ENCODE measurements at regions of chr20 and their contacts with region 1.

Region 1: GRCh38 chr20:51404298-51405060 is 138.0 kb downstream of the NFATC2 start:
- DNase-seq: peak; percentile 69
- ATAC-seq: peak; percentile 80
- H3K4me3 Mint-ChIP-seq: peak overlapping the region; percentile 56
- H3K27ac Mint-ChIP-seq: peak overlapping the region; percentile 99
- H3K4me1 Mint-ChIP-seq: peaks cover 84% of the 10 kb centered on the region
- H3K27me3 Mint-ChIP-seq: no peaks in the 10 kb centered on the region
- CTCF ChIP-seq: no peak

Region 2: GRCh38 chr20:50815162-50815989 is 589.1 kb before region 1 on chr20:
- CTCF ChIA-PET with region 1: no interaction called
- POLR2A ChIA-PET with region 1: no interaction called
- intact Hi-C with region 1: loop called (anchors 10 kb)
- DNase-seq: no peak
- ATAC-seq: peak; percentile 56
- H3K4me3 Mint-ChIP-seq: peak overlapping the region; percentile 81
- H3K27ac Mint-ChIP-seq: peak overlapping the region; percentile 98
- H3K4me1 Mint-ChIP-seq: peaks cover 96% of the 10 kb centered on the region
- H3K27me3 Mint-ChIP-seq: no peaks in the 10 kb centered on the region
- CTCF ChIP-seq: no peak

Region 3: GRCh38 chr20:51385646-51386530 is 18.6 kb before region 1 on chr20:
- CTCF ChIA-PET with region 1: interaction called, 14 read pairs
- POLR2A ChIA-PET with region 1: interaction called, 8 read pairs
- intact Hi-C with region 1: loop called (anchors 1 kb)
- DNase-seq: no peak
- ATAC-seq: peak; percentile 65
- H3K4me3 Mint-ChIP-seq: no peak overlapping the region
- H3K27ac Mint-ChIP-seq: peak overlapping the region; percentile 62
- H3K4me1 Mint-ChIP-seq: peaks cover 42% of the 10 kb centered on the region
- H3K27me3 Mint-ChIP-seq: no peaks in the 10 kb centered on the region
- CTCF ChIP-seq: no peak

Region 4: GRCh38 chr20:51440589-51440988 is 36.1 kb after region 1 on chr20:
- CTCF ChIA-PET with region 1: no interaction called
- POLR2A ChIA-PET with region 1: no interaction called
- intact Hi-C with region 1: loop called (anchors 5 kb)
- DNase-seq: no peak
- ATAC-seq: peak; percentile 54
- H3K4me3 Mint-ChIP-seq: peak overlapping the region; percentile 41
- H3K27ac Mint-ChIP-seq: peak overlapping the region; percentile 46
- H3K4me1 Mint-ChIP-seq: peaks cover 39% of the 10 kb centered on the region
- H3K27me3 Mint-ChIP-seq: no peaks in the 10 kb centered on the region
- CTCF ChIP-seq: no peak

Region 5: DNA sequence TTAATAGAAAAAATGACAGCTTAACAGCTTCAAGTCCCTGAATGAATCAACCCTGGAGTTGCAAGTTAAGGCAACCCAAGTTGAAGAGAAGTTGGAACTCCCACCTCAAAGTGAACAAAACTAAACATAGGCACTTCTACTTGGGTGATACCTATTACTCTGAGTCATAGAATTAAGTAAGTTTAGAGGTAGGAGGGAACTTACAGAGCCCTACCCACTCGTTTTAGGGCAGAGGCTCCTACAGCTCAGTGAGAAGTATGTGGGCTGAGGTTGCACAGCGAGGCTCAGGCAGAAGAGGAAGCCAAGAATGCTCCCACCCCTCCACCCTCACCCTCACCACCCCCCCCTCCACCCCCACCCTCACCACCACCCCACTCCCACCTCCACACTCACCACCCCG is 95.8 kb after region 1 on chr20:
- CTCF ChIA-PET with region 1: no interaction called
- POLR2A ChIA-PET with region 1: interaction called, 14 read pairs
- intact Hi-C with region 1: loop called (anchors 1 kb)
- DNase-seq: no peak
- ATAC-seq: peak; percentile 85
- H3K4me3 Mint-ChIP-seq: no peak overlapping the region
- H3K27ac Mint-ChIP-seq: peak overlapping the region; percentile 69
- H3K4me1 Mint-ChIP-seq: peaks cover 93% of the 10 kb centered on the region
- H3K27me3 Mint-ChIP-seq: no peaks in the 10 kb centered on the region
- CTCF ChIP-seq: no peak

Region 6: GRCh38 chr20:51595058-51595532 is 190.6 kb after region 1 on chr20:
- CTCF ChIA-PET with region 1: interaction called, 6 read pairs
- POLR2A ChIA-PET with region 1: no interaction called
- intact Hi-C with region 1: loop called (anchors 1 kb)
- DNase-seq: peak; percentile 57
- ATAC-seq: peak; percentile 93
- H3K4me3 Mint-ChIP-seq: peak overlapping the region; percentile 55
- H3K27ac Mint-ChIP-seq: no peak overlapping the region
- H3K4me1 Mint-ChIP-seq: peaks cover 21% of the 10 kb centered on the region
- H3K27me3 Mint-ChIP-seq: peaks cover 38% of the 10 kb centered on the region
- CTCF ChIP-seq: peak; percentile 91